WTC11 (cell line): ENCODE measurements at regions of chr12 and their contacts with region 1.

Region 1: DNA sequence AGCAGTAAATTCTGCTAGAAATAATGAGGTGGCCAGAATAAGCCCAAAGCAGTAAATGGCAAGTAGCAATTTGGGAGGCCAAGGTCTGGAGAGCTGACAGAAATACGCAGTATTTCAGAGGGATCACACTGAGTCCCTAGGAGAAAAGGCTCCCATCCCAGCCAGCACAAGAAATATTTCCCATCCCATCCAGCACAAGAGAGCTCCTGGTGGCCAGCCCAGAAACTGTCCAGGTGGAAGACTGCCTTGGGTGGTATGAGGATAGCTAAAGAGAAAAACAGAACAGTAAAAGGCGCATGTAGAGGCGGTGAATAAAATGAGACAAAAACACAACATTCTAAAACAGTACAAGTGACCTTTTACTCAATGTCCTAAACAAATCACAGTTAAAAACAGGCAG is 120.7 kb downstream of the HECTD4 start:
- DNase-seq: peak; percentile 53
- ATAC-seq: peak; percentile 95
- H3K4me3 Mint-ChIP-seq: no peak overlapping the region
- H3K27ac Mint-ChIP-seq: peak overlapping the region; percentile 75; the same call in 1 of the 2 replicates
- H3K4me1 Mint-ChIP-seq: peaks cover 12% of the 10 kb centered on the region
- H3K27me3 Mint-ChIP-seq: no peaks in the 10 kb centered on the region
- CTCF ChIP-seq: no peak

Region 2: DNA sequence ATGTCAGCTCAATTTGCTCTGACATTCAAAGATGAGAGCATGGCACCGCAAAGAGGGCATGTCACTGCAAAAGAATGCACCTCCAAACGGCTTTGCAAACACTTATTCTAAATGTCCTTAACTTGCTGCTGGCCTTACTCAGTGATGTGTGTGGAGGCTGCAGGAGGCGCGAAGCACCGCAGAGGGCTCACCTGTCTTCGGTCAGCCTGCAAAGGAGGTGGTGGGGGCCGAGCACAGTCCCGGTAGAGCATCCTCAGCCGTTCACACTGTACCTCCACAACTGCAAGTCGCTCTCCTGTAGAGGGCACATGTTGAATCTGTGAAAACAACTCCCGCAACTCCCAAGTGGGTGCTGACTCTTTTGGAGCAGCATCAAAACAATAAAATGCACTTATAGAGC is 42.4 kb before region 1 on chr12:
- CTCF ChIA-PET with region 1: no interaction called
- POLR2A ChIA-PET with region 1: no interaction called
- DNase-seq: peak; percentile 23
- ATAC-seq: peak; percentile 83
- H3K4me3 Mint-ChIP-seq: no peak overlapping the region
- H3K27ac Mint-ChIP-seq: no peak overlapping the region
- H3K4me1 Mint-ChIP-seq: no peaks in the 10 kb centered on the region
- H3K27me3 Mint-ChIP-seq: no peaks in the 10 kb centered on the region
- CTCF ChIP-seq: no peak

Region 3: GRCh38 chr12:112386726-112387125 is 125.2 kb after region 1 on chr12:
- CTCF ChIA-PET with region 1: interaction called, 12 read pairs
- POLR2A ChIA-PET with region 1: no interaction called
- DNase-seq: no peak
- ATAC-seq: no peak
- H3K4me3 Mint-ChIP-seq: no peak overlapping the region
- H3K27ac Mint-ChIP-seq: no peak overlapping the region
- H3K4me1 Mint-ChIP-seq: peaks cover 11% of the 10 kb centered on the region
- H3K27me3 Mint-ChIP-seq: peaks cover 11% of the 10 kb centered on the region
- CTCF ChIP-seq: no peak